Sigmoid colon (tissue), 7 donors: ENCODE measurements at regions of chr18 and their contacts with region 1.

Region 1: DNA sequence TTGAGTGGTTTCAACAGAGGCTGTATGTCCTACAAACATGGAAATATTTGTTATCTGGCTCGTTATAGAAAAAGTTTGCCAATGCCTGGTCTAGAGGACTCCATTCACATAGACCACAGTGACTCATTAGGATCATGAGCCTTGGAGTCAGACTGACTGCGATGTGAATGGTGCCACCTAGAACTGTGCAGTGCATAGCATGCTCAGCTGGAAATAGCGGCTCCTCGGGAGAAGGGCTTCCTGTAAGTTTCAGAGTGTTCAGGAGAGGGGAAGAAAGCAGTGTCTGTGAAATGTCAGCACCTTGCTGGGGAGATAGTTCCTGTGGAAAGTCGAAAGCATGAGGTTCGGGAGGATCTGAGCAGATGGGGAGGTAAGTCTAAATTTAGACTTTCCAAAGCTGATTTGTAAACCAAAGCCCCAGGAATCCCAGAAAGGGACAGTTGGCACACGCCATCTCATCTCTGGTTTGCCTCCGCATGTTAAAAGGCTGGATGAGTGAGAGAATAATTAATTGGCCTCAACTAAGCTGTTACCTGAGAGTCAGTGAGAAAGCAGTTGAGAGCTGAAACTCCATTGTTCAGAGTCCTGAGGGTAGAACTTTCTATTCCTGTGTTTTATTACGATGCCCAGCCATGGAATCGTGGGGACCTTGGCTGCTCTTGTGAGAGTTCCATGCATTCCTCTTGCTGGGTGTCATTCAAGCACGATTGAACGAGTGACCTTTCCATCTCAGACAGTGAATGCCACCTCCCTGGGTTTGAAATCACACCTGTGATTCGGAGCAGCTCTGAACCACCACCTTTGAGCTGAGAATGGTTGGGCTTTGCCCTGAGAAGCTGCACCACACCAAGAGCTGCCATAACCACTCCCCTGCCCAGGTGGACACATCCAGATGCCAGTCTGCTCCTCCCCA is 99.5 kb downstream of the MAPK4 start:
- DNase-seq: peak; percentile 80
- H3K4me3 ChIP-seq: no peak overlapping the region
- H3K27ac ChIP-seq: peak overlapping the region; percentile 71 to 94 (median 80)
- H3K4me1 ChIP-seq: peaks cover 0 to 57% (median 43%) of the 10 kb centered on the region in 4 donors
- H3K27me3 ChIP-seq: no peaks in the 10 kb centered on the region
- CTCF ChIP-seq: peak in 1 of 4 experiments; percentile 31
- EP300 ChIP-seq: peak in 1 of 4 donors; percentile 65
- POLR2A ChIP-seq: no peak

Region 2: GRCh38 chr18:49813319-49814146 is 845.8 kb before region 1 on chr18 and contains the start of gene ACAA2:
- intact Hi-C with region 1: loop called (anchors 10 kb)
- DNase-seq: peak; percentile 95
- H3K4me3 ChIP-seq: peak within 1 kb of the TSS; percentile 71 to 89 (median 82)
- H3K27ac ChIP-seq: peak within 1 kb of the TSS; percentile 91 to 96 (median 94)
- H3K4me1 ChIP-seq: peaks cover 0 to 28% (median 23%) of the 10 kb centered on the region in 4 donors
- H3K27me3 ChIP-seq: no peaks in the 10 kb centered on the region
- CTCF ChIP-seq: no peak
- EP300 ChIP-seq: no peak
- POLR2A ChIP-seq: peak; percentile 55 to 72
- total RNA-seq, gene ACAA2: 61.8 to 87.7 (median 63.2) TPM

Region 3: GRCh38 chr18:50507120-50507590 is 152.2 kb before region 1 on chr18:
- intact Hi-C with region 1: loop called (anchors 2 kb)
- DNase-seq: peak; percentile 72
- H3K4me3 ChIP-seq: no peak overlapping the region
- H3K27ac ChIP-seq: no peak overlapping the region
- H3K4me1 ChIP-seq: peaks cover 0 to 4% (median 3%) of the 10 kb centered on the region in 4 donors
- H3K27me3 ChIP-seq: no peaks in the 10 kb centered on the region
- CTCF ChIP-seq: peak in 3 of 4 experiments; percentile 52 to 70 (median 68)
- EP300 ChIP-seq: no peak
- POLR2A ChIP-seq: no peak

Region 4: DNA sequence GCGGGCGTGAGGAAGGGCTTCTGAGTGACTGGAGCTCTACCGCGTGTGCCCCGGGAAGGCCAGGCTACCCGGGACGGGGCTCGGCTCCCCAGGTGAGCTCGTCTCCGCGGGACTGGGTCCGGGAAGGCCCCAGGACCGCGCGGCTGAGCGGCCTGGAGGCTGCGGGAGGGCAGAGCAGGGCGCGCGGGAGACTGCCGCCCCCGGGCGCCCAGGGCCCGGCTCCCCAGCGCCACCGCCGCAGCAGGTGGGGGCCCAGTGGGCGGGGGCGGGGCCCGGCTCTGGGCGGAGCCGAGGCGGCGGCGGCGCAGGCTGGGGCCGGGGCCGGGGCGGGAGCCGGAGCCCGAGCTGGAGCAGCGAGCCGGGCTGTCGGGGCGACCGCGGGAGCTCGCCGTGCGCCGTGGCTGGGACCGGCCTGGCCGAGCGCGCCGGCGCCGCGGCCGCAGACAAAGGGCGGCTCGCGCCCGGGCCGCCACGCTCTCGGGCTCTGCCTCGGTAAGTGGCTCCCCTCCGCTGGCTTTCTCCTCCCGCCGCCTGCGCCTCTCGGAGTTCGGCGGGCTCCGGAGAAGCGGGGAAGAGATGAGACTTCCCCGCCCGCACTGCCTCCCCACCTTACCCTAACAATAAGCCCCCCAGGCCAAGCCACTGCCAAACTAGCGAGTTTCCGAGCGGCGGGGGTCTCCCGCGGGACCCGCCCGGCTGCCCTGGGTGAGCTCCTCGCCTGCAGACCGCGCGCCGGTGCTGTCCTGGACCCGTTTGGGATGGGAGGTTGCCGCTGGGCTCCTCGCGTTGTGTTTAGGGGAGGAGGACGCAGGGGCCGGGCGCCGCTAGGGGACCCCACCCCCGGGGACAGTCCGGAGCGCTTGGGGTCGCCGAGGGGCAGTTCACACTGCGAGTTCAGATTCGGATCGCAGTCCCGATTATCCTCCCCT is 99.3 kb before region 1 on chr18 and contains the start of gene MAPK4:
- intact Hi-C with region 1: loop called (anchors 2 kb)
- DNase-seq: peak; percentile 71
- H3K4me3 ChIP-seq: peak within 1 kb of the TSS; percentile 62 to 79 (median 67)
- H3K27ac ChIP-seq: peak within 1 kb of the TSS; percentile 75 to 86 (median 82)
- H3K4me1 ChIP-seq: peaks cover 0 to 23% (median 18%) of the 10 kb centered on the region in 4 donors
- H3K27me3 ChIP-seq: peaks cover 0 to 4% (median 0%) of the 10 kb centered on the region in 3 donors
- CTCF ChIP-seq: no peak
- EP300 ChIP-seq: no peak
- POLR2A ChIP-seq: no peak
- total RNA-seq, gene MAPK4: 6.8 to 16.1 (median 12.9) TPM

Region 5: GRCh38 chr18:50619861-50620275 is 39.5 kb before region 1 on chr18:
- intact Hi-C with region 1: loop called (anchors 2 kb)
- DNase-seq: no peak
- H3K4me3 ChIP-seq: no peak overlapping the region
- H3K27ac ChIP-seq: peak overlapping the region; percentile 32 to 78 (median 68)
- H3K4me1 ChIP-seq: peaks cover 0 to 38% (median 22%) of the 10 kb centered on the region in 4 donors
- H3K27me3 ChIP-seq: no peaks in the 10 kb centered on the region
- CTCF ChIP-seq: no peak
- EP300 ChIP-seq: no peak
- POLR2A ChIP-seq: no peak

Region 6: GRCh38 chr18:50696929-50697328 is 37.6 kb after region 1 on chr18:
- intact Hi-C with region 1: no loop called
- DNase-seq: no peak
- H3K4me3 ChIP-seq: no peak overlapping the region
- H3K27ac ChIP-seq: no peak overlapping the region
- H3K4me1 ChIP-seq: no peaks in the 10 kb centered on the region
- H3K27me3 ChIP-seq: no peaks in the 10 kb centered on the region
- CTCF ChIP-seq: no peak
- EP300 ChIP-seq: no peak
- POLR2A ChIP-seq: no peak

Region 7: DNA sequence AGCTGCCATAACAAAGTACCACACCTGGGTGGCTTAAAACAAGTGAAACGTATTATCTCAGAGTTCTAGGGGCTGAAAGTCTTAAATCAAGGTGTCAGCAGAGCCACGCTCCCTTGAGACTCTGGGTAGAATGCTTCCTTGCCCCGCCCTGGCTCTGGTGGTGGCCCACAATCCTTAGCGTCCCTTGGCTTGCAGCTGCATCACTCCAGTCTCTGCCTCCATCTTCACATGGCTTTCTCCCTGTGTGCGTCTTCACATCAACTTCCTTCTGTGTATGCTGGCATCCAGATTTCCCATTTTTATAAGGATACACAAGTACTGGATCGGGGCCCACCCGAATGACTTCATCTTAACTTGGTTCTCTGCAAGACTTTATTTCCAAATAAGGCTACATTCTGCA is 98.0 kb after region 1 on chr18:
- intact Hi-C with region 1: loop called (anchors 5 kb)
- DNase-seq: peak; percentile 82
- H3K4me3 ChIP-seq: no peak overlapping the region
- H3K27ac ChIP-seq: peak overlapping the region in 1 of 4 donors; percentile 41
- H3K4me1 ChIP-seq: peaks cover 0 to 5% (median 0%) of the 10 kb centered on the region in 4 donors
- H3K27me3 ChIP-seq: no peaks in the 10 kb centered on the region
- CTCF ChIP-seq: no peak
- EP300 ChIP-seq: no peak
- POLR2A ChIP-seq: no peak

Region 8: GRCh38 chr18:50878345-50879301 is 219.3 kb after region 1 on chr18 and contains the start of gene ME2:
- intact Hi-C with region 1: loop called (anchors 5 kb)
- DNase-seq: peak; percentile 96
- H3K4me3 ChIP-seq: peak within 1 kb of the TSS; percentile 81 to 90 (median 83)
- H3K27ac ChIP-seq: peak within 1 kb of the TSS; percentile 95 to 98 (median 96)
- H3K4me1 ChIP-seq: peaks cover 0 to 20% (median 11%) of the 10 kb centered on the region in 4 donors
- H3K27me3 ChIP-seq: no peaks in the 10 kb centered on the region
- CTCF ChIP-seq: no peak
- EP300 ChIP-seq: no peak
- POLR2A ChIP-seq: peak; percentile 50 to 62
- total RNA-seq, gene ME2: 49.6 to 66.2 (median 62.6) TPM

Region 9: DNA sequence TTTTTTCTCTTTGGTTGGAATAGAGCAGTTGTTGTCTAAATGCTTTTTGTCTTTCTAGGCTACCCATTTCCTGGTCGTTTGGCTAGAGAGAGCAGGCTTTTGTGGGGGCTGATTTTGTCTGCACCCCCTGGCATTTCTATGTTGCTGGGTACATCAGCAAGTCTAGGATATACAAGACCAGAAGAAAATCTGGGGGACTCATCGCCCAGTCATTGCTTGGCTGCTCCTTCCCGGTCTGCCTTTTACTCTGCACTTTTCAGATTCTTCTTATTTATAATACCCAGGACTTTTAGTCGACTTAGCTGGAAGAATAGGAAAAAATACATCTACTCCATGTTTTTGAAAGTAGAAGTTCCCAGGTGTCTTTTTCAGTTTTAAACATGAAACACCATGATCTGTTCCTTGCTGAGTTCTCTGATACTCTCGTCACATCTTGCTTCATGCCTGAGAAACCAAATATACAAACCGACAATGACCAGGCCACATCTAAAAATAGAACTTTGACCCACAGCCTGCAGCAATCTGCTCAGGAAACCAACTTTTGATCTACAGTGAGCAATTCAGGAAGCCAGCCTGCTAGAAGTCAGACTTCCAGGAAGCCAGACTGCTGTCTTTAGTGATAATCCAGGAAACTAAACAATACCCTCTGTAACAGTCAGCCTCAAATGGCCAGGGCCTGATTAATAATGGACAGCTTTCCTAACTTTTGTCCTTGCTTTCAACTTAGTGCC is 701.9 kb after region 1 on chr18:
- intact Hi-C with region 1: no loop called
- DNase-seq: no peak
- H3K4me3 ChIP-seq: no peak overlapping the region
- H3K27ac ChIP-seq: peak overlapping the region in 2 of 4 donors; percentile 19 to 24
- H3K4me1 ChIP-seq: peaks cover 0 to 12% (median 5%) of the 10 kb centered on the region in 4 donors
- H3K27me3 ChIP-seq: no peaks in the 10 kb centered on the region
- CTCF ChIP-seq: no peak
- EP300 ChIP-seq: no peak
- POLR2A ChIP-seq: no peak